Activated T-helper 1 cell treated with anti-CD3 and anti-CD28 coated beads, Interleukin-12 subunit alpha, Interleukin-12 subunit beta, Interleukin-2, Interleukin-4 antibody, amounts not matched to agents 30 ng/mL and 10 ng/mL and 1 ng/mL, durations not matched to agents 14 hours and 24 hours and 36 hours (primary cell): ENCODE measurements at regions of chr9 and their contacts with region 1.

Region 1: GRCh38 chr9:109918339-109919163 is 138.6 kb downstream of the PALM2AKAP2 start:
- DNase-seq: peak; percentile 44
- H3K4me3 Mint-ChIP-seq: peak overlapping the region; percentile 75
- H3K27ac Mint-ChIP-seq: peak overlapping the region; percentile 97
- H3K4me1 Mint-ChIP-seq: peaks cover 64% of the 10 kb centered on the region
- H3K27me3 Mint-ChIP-seq: no peaks in the 10 kb centered on the region

Region 2: GRCh38 chr9:109934857-109935215 is 16.3 kb after region 1 on chr9:
- intact Hi-C with region 1: loop called (anchors 1 kb)
- DNase-seq: no peak
- H3K4me3 Mint-ChIP-seq: peak overlapping the region; percentile 45
- H3K27ac Mint-ChIP-seq: peak overlapping the region; percentile 85
- H3K4me1 Mint-ChIP-seq: peaks cover 57% of the 10 kb centered on the region
- H3K27me3 Mint-ChIP-seq: no peaks in the 10 kb centered on the region

Region 3: GRCh38 chr9:109967651-109968642 is 49.4 kb after region 1 on chr9:
- intact Hi-C with region 1: no loop called
- DNase-seq: peak; percentile 30
- H3K4me3 Mint-ChIP-seq: peak overlapping the region; percentile 63
- H3K27ac Mint-ChIP-seq: peak overlapping the region; percentile 96
- H3K4me1 Mint-ChIP-seq: peaks cover 88% of the 10 kb centered on the region
- H3K27me3 Mint-ChIP-seq: peaks cover 5% of the 10 kb centered on the region

Region 4: GRCh38 chr9:110048403-110048975 is 129.9 kb after region 1 on chr9:
- intact Hi-C with region 1: loop called (anchors 1 kb)
- DNase-seq: peak; percentile 81
- H3K4me3 Mint-ChIP-seq: peak overlapping the region; percentile 93
- H3K27ac Mint-ChIP-seq: peak overlapping the region; percentile 89
- H3K4me1 Mint-ChIP-seq: peaks cover 58% of the 10 kb centered on the region
- H3K27me3 Mint-ChIP-seq: no peaks in the 10 kb centered on the region

Region 5: GRCh38 chr9:110125207-110125751 is 206.7 kb after region 1 on chr9:
- intact Hi-C with region 1: no loop called
- DNase-seq: no peak
- H3K4me3 Mint-ChIP-seq: peak overlapping the region; percentile 42
- H3K27ac Mint-ChIP-seq: peak overlapping the region; percentile 74
- H3K4me1 Mint-ChIP-seq: peaks cover 73% of the 10 kb centered on the region
- H3K27me3 Mint-ChIP-seq: no peaks in the 10 kb centered on the region